Mammary epithelial cell (primary cell): ENCODE measurements at regions of chr19 and their contacts with region 1.

Region 1: GRCh38 chr19:19145684-19146608 is 7.7 kb upstream of the TMEM161A start:
- DNase-seq: peak; percentile 42
- H3K4me3 ChIP-seq: peak overlapping the region in 2 of 3 experiments; percentile 20 to 29
- H3K27ac ChIP-seq: no peak overlapping the region
- H3K4me1 ChIP-seq: peaks cover 2% of the 10 kb centered on the region
- H3K27me3 ChIP-seq: no peaks in the 10 kb centered on the region
- CTCF ChIP-seq: peak; percentile 92 to 96

Region 2: DNA sequence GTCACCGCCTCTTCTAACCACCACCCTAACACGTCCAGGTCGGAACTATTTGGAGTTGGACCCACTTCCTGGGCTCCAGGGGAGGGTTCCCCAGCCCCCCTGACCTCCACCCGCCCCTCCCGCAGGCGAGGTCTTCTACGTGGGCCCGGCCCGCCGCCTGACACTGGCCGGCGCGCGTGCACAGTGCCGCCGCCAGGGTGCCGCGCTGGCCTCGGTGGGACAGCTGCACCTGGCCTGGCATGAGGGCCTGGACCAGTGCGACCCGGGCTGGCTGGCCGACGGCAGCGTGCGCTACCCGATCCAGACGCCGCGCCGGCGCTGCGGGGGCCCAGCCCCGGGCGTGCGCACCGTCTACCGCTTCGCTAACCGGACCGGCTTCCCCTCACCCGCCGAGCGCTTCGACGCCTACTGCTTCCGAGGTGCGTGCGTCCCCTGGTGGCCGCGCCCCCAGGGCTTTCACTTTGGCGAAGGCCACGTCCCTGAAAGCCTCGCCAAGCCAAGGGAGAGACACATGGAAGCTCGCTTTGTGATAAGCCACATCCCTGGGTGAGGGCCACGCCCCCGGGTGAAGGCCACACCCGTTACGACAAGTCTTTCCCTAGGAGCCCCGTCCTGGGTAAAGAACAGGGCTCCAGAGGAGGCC is 79.0 kb after region 1 on chr19:
- CTCF ChIA-PET with region 1: no interaction called
- dilution Hi-C with region 1: no loop called
- in situ Hi-C with region 1: no loop called
- intact Hi-C with region 1: loop called (anchors 1 kb)
- DNase-seq: peak; percentile 59
- H3K4me3 ChIP-seq: peak overlapping the region in 1 of 3 experiments; percentile 30
- H3K27ac ChIP-seq: no peak overlapping the region
- H3K4me1 ChIP-seq: no peaks in the 10 kb centered on the region
- H3K27me3 ChIP-seq: no peaks in the 10 kb centered on the region
- CTCF ChIP-seq: peak; percentile 41 to 67

Region 3: DNA sequence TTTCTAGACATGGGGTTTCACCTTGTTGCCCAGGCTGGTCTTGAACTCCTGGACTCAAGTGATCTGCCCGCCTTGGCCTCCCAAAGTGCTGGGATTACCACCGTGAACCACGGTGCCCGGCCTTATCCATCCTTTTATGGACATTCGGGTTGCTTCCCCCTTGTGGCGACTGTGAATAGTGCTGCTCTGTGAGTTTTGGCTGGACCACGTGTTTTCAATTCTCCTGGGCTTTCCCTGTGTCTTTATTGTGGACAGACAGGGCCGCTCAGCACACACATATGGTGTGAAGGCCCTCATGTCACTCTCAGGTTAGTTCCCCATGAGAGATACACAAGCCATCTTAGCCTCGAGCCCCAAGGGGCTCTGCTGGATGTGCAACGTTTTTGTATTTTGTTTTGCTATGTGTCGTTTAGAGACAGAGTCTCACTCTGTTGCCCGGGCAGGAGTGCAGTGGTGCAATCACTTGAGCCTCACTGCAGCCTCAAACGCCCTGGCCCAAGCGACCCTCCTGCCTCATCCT is 215.2 kb after region 1 on chr19:
- CTCF ChIA-PET with region 1: no interaction called
- dilution Hi-C with region 1: no loop called
- in situ Hi-C with region 1: no loop called
- intact Hi-C with region 1: loop called (anchors 1 kb)
- DNase-seq: peak; percentile 74
- H3K4me3 ChIP-seq: no peak overlapping the region
- H3K27ac ChIP-seq: no peak overlapping the region
- H3K4me1 ChIP-seq: peaks cover 1% of the 10 kb centered on the region
- H3K27me3 ChIP-seq: no peaks in the 10 kb centered on the region
- CTCF ChIP-seq: peak; percentile 62 to 80